Dorsolateral prefrontal cortex (tissue), 120 donors: ENCODE measurements at regions of chr22 and their contacts with region 1.

Region 1: GRCh38 chr22:23080613-23081290 is 10.4 kb downstream of the GNAZ start:
- DNase-seq: no peak
- H3K4me3 ChIP-seq: peak overlapping the region in 1 of 59 donors; percentile 26
- H3K27ac ChIP-seq: peak overlapping the region in 58 of 59 donors; percentile 23 to 93 (median 81)
- H3K27me3 ChIP-seq: no peaks in the 10 kb centered on the region
- CTCF ChIP-seq: no peak

Region 2: GRCh38 chr22:23098718-23099530 is 18.2 kb after region 1 on chr22:
- intact Hi-C with region 1: loop called in 1 of 2 experiments (anchors 2 kb)
- DNase-seq: peak in 8 of 10 donors; percentile 48 to 96 (median 66)
- H3K4me3 ChIP-seq: peak overlapping the region in 15 of 59 donors; percentile 0 to 33 (median 20)
- H3K27ac ChIP-seq: peak overlapping the region; percentile 42 to 100 (median 91)
- H3K27me3 ChIP-seq: no peaks in the 10 kb centered on the region
- CTCF ChIP-seq: peak in 2 of 56 donors; percentile 9 to 23